CD8-positive, alpha-beta memory T cell (primary cell): ENCODE measurements at regions of chr19 and their contacts with region 1.

Region 1: DNA sequence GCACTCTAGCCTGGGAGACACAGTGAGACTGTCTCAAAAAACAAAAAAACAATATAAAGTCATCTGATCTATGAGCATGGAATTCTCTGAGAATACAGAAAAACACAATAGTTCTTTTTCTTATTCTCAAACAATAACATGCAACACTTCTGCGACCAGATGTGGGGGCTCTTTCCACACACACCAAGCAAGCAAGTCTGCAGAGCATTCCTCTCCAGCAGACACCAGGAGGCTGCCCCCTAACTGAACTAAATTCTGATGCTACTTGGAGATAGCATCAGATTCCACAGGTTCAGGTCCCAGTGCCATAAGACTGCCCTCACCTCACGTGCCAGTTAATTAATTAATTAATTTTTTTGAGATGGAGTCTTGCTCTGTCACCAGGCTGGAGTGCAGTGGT is 27.7 kb downstream of the ZNF101 start:
- DNase-seq: no peak
- H3K4me3 ChIP-seq: no peak overlapping the region
- H3K4me3 Mint-ChIP-seq: no peak overlapping the region
- H3K27ac ChIP-seq: no peak overlapping the region
- H3K27ac Mint-ChIP-seq: peak overlapping the region in 1 of 8 donors; percentile 38
- H3K4me1 ChIP-seq: no peaks in the 10 kb centered on the region
- H3K4me1 Mint-ChIP-seq: peaks cover 0 to 3% (median 3%) of the 10 kb centered on the region in 3 donors
- H3K27me3 ChIP-seq: no peaks in the 10 kb centered on the region
- H3K27me3 Mint-ChIP-seq: no peaks in the 10 kb centered on the region

Region 2: DNA sequence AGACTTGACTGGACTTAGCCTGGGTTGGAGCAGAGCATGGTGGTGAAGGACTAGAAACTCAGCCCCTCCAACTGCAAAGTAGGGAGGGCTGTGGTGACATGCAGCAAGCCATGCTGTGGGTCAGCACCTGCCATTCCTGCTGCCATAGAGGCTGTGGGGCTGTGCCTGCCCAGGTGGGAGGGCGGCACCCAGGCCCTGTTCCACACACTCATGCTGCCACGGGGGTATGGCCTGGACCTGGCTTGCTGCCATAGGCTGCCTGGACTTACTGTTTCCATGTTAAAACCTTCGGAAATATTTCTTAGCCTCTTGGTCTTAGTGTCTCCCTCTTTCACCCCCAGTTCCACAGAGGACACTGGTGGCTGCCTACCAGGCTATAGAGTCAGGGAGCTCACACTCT is 129.0 kb before region 1 on chr19:
- CTCF ChIA-PET with region 1: no interaction called
- POLR2A ChIA-PET with region 1: interaction called, 13 read pairs
- DNase-seq: no peak
- H3K4me3 ChIP-seq: no peak overlapping the region
- H3K4me3 Mint-ChIP-seq: no peak overlapping the region
- H3K27ac ChIP-seq: no peak overlapping the region
- H3K27ac Mint-ChIP-seq: peak overlapping the region in 4 of 8 donors; percentile 40 to 84 (median 61)
- H3K4me1 ChIP-seq: no peaks in the 10 kb centered on the region
- H3K4me1 Mint-ChIP-seq: peaks cover 0 to 8% (median 3%) of the 10 kb centered on the region in 3 donors
- H3K27me3 ChIP-seq: no peaks in the 10 kb centered on the region
- H3K27me3 Mint-ChIP-seq: no peaks in the 10 kb centered on the region

Region 3: DNA sequence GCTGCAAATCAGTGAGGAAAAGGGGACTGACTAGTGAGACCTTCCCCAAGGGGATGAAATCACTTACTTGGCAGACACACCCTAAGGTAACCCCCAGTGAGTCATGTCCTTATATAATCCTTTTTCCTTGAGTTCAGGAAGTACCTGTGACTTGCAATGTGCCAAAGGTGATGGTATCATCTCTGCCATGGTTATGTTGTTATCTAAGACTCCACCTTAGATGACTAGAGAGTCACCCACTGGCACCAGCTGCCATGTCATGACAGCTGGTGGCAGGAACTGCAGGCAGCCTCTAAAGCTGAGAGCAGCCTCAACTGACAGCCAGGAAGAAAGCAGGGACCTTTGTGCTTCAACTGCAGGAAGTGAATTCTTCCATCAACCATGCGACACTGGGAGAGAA is 90.4 kb before region 1 on chr19:
- CTCF ChIA-PET with region 1: no interaction called
- POLR2A ChIA-PET with region 1: no interaction called
- DNase-seq: peak; percentile 18 to 73 (median 43)
- H3K4me3 ChIP-seq: no peak overlapping the region
- H3K4me3 Mint-ChIP-seq: peak overlapping the region; percentile 11 to 85 (median 76)
- H3K27ac ChIP-seq: peak overlapping the region; percentile 45
- H3K27ac Mint-ChIP-seq: peak overlapping the region; percentile 89 to 98 (median 96)
- H3K4me1 ChIP-seq: peaks cover 53% of the 10 kb centered on the region
- H3K4me1 Mint-ChIP-seq: peaks cover 49 to 63% (median 60%) of the 10 kb centered on the region in 3 donors
- H3K27me3 ChIP-seq: no peaks in the 10 kb centered on the region
- H3K27me3 Mint-ChIP-seq: no peaks in the 10 kb centered on the region